HepG2 (cell line): ENCODE measurements at regions of chr10 and their contacts with region 1.

Region 1: GRCh38 chr10:79400146-79401004 is 45.0 kb downstream of the ZCCHC24 start:
- DNase-seq: peak; percentile 37
- ATAC-seq: peak; percentile 64
- H3K4me3 ChIP-seq: no peak overlapping the region
- H3K27ac ChIP-seq: no peak overlapping the region
- H3K4me1 ChIP-seq: peaks cover 64% of the 10 kb centered on the region
- H3K27me3 ChIP-seq: no peaks in the 10 kb centered on the region
- CTCF ChIP-seq: peak; percentile 86
- EP300 ChIP-seq: no peak
- POLR2A ChIP-seq: no peak
- RAD21 ChIP-seq: peak; percentile 82

Region 2: GRCh38 chr10:79322616-79323543 is 77.5 kb before region 1 on chr10:
- CTCF ChIA-PET with region 1: no interaction called
- POLR2A ChIA-PET with region 1: no interaction called
- in situ Hi-C with region 1: no loop called
- intact Hi-C with region 1: no loop called
- DNase-seq: no peak
- ATAC-seq: no peak
- H3K4me3 ChIP-seq: no peak overlapping the region
- H3K27ac ChIP-seq: no peak overlapping the region
- H3K4me1 ChIP-seq: peaks cover 10% of the 10 kb centered on the region
- H3K27me3 ChIP-seq: 0 out of 5 replicates have a peak, but pooled peaks cover 0 to 3% of the 10 kb centered on the region in 2 experiments
- CTCF ChIP-seq: no peak
- EP300 ChIP-seq: no peak
- POLR2A ChIP-seq: no peak
- RAD21 ChIP-seq: no peak

Region 3: DNA sequence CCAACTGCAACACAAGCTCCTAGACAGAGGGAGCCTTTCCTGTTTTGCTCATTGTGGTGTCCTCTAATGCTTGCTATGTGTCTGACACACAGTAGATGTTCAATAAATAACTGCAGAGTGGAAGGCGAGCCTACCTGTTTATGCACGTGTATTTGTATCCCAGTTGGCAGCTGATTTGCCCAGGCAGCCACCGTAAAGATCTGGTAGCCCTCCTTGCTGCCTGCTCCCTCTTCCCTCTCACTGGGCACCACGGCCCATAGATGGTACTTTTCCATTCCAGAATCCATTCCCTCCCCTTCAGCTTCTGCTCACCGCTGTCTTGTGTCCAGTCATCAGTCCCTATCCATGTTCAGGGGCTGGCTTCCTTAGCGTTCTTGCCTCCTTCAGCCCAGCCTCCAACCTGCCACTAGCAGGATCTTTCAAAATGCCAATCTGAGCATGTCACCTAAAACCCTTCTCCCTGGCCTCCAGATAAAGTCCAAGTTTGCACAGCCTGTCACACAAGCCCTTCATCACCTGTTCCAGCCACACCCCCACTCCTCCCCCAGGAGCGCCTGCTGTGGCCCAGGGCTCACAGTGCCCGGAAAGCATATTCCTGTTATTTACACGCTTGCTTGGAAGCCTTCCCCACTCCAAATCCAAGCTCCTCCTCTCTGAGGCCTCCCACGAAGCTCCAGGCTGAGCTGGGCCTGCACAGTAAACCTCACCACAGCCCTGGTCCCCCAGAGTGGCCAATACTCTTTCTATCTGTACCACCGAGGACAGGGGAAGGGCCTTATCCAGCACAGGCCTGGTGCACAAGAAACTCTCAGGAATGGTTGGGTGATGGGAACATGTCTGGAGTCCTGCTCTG is 24.1 kb after region 1 on chr10:
- CTCF ChIA-PET with region 1: no interaction called
- POLR2A ChIA-PET with region 1: no interaction called
- in situ Hi-C with region 1: no loop called
- intact Hi-C with region 1: loop called (anchors 2 kb)
- DNase-seq: peak; percentile 91
- ATAC-seq: peak; percentile 98
- H3K4me3 ChIP-seq: peak overlapping the region in 2 of 3 experiments; percentile 14 to 46; a peak in 3 of 6 replicates
- H3K27ac ChIP-seq: peak overlapping the region; percentile 65
- H3K4me1 ChIP-seq: peaks cover 35% of the 10 kb centered on the region
- H3K27me3 ChIP-seq: no peaks in the 10 kb centered on the region
- CTCF ChIP-seq: 0 out of 2 replicates have a peak, but pooled peaks have one; percentile 14
- EP300 ChIP-seq: peak in 1 of 2 experiments; percentile 56; a peak in 1 of 4 replicates
- POLR2A ChIP-seq: no peak
- RAD21 ChIP-seq: no peak

Region 4: GRCh38 chr10:79445141-79445976 is 45.0 kb after region 1 on chr10 and contains the start of gene ZCCHC24:
- CTCF ChIA-PET with region 1: no interaction called
- POLR2A ChIA-PET with region 1: no interaction called
- in situ Hi-C with region 1: no loop called
- intact Hi-C with region 1: loop called (anchors 5 kb)
- DNase-seq: peak; percentile 96
- ATAC-seq: peak; percentile 95
- H3K4me3 ChIP-seq: peak within 1 kb of the TSS; percentile 69 to 77 (median 76)
- H3K27ac ChIP-seq: no peak within 1 kb of the TSS
- H3K4me1 ChIP-seq: peaks cover 54% of the 10 kb centered on the region
- H3K27me3 ChIP-seq: peaks cover 2 to 21% of the 10 kb centered on the region in 2 experiments; a peak in 4 of 5 replicates
- CTCF ChIP-seq: no peak
- EP300 ChIP-seq: no peak
- POLR2A ChIP-seq: peak; percentile 26 to 65; a peak in 2 of 4 replicates
- RAD21 ChIP-seq: no peak
- total RNA-seq, gene ZCCHC24: 3.1 and 3.9 TPM in 2 replicates

Region 5: DNA sequence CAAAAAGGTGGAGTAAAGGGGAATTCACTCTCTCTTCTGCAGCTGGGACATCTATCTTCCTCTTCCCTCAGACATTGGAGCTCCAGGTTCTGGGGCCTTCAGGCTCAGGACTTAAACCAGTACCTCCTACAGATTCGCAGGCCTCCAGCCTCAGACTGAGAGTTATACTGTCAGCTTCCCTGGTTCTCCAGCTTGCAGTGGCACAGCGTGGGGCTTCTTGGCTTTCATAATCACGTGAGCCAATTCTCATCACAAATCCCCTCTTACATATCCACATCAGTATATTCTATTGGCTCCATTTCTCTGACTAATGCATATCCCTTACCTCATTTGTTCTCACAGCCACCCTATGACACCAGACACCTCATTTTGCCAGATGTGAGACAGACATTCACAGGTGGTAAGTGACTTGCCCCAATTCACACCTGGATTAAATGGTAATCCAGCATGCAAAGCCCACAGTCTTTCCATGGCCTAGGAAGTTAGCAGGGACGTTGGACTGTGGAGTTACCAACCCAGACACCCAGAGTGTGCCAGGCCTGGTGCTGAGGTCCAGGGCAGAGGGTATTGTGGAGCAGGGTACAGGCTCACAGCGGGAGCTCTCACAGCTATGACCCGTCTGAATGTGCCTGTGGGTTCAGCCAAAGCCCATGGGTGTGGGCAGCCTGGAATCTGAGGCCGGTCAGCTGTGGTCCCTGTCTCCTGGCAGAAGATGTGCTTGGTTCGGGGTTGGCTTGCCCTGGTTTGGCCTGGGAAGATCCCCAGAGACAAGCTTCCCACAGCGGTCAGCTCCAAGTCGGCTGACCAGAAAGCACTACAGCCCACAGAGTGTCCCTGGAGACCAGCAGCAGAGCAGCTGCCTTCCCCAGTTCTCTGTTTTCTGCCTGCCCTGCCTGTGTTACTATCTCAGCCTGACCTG is 63.5 kb after region 1 on chr10:
- CTCF ChIA-PET with region 1: interaction called, 13 read pairs
- POLR2A ChIA-PET with region 1: no interaction called
- in situ Hi-C with region 1: no loop called
- intact Hi-C with region 1: loop called (anchors 1 kb)
- DNase-seq: no peak
- ATAC-seq: no peak
- H3K4me3 ChIP-seq: no peak overlapping the region
- H3K27ac ChIP-seq: no peak overlapping the region
- H3K4me1 ChIP-seq: peaks cover 8% of the 10 kb centered on the region
- H3K27me3 ChIP-seq: peaks cover 0 to 11% of the 10 kb centered on the region in 2 experiments; a peak in 2 of 5 replicates
- CTCF ChIP-seq: no peak
- EP300 ChIP-seq: no peak
- POLR2A ChIP-seq: no peak
- RAD21 ChIP-seq: no peak

Region 6: GRCh38 chr10:79487296-79488194 is 87.2 kb after region 1 on chr10:
- CTCF ChIA-PET with region 1: interaction called, 23 read pairs
- POLR2A ChIA-PET with region 1: no interaction called
- in situ Hi-C with region 1: no loop called
- intact Hi-C with region 1: loop called (anchors 1 kb)
- DNase-seq: peak; percentile 61
- ATAC-seq: peak; percentile 95
- H3K4me3 ChIP-seq: no peak overlapping the region
- H3K27ac ChIP-seq: no peak overlapping the region
- H3K4me1 ChIP-seq: no peaks in the 10 kb centered on the region
- H3K27me3 ChIP-seq: peaks cover 3 to 27% of the 10 kb centered on the region in 2 experiments; a peak in 3 of 5 replicates
- CTCF ChIP-seq: peak; percentile 92
- EP300 ChIP-seq: no peak
- POLR2A ChIP-seq: no peak
- RAD21 ChIP-seq: peak; percentile 81